AG04449 (cell line): ENCODE measurements at regions of chr11 and their contacts with region 1.

Region 1: DNA sequence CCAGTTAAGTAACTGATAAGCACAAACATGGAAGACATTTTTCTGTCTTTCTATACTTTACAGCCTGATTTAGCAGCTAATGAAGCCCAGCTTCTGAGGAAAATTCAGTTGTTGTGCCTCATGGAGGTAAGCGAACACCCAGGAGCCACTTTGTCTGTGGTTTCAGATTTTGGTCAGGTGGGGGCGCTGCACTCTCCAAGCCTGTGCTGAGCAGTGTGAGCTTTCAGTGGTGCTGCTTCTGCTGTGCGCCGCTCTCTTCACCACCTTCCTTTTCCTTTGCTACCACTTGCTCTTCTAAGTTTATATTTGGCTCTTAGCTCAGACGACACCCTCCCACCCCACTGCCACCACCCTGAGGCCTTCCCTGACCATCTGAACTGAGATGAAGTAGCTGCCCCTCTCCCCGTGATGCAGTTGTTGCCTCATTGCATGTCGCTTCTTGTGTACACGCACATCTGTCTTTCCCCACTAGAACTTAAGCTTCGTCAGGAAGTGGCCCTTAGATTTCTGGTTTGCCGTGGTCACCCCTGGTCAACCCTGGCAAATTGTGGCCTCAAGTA is 14.0 kb downstream of the PSMD13 start:
- DNase-seq: no peak
- H3K4me3 ChIP-seq: no peak overlapping the region
- CTCF ChIP-seq: peak; percentile 69

Region 2: DNA sequence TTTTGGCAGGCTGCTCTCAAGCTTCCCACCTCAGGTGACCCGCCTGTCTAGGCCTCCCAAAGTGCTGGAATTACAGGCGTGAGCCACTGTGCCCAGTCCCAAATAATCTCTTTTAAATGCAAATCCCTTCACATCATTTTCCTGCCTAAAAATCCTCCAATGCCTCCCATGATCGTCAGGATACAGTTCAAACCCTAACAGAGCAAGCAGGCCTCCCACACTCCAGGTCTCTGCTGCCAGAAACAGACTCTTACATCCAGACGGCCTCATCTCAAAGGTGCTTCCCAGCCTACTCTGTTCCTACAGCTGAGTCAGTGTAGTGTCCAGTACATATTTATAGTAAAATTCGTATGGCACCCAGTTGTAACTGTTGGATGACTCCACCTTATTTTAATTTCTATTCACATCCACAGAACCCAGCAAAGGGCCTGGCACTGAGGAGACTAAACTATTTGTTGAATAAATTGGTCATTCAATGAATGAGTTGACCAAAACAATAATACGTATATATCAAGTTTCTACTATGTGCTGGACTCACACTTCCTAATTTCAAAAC is 22.9 kb before region 1 on chr11:
- CTCF ChIA-PET with region 1: interaction called, 24 read pairs
- POLR2A ChIA-PET with region 1: no interaction called
- DNase-seq: no peak
- H3K4me3 ChIP-seq: no peak overlapping the region
- CTCF ChIP-seq: no peak

Region 3: GRCh38 chr11:261624-262023 is 10.8 kb after region 1 on chr11:
- CTCF ChIA-PET with region 1: interaction called, 12 read pairs
- POLR2A ChIA-PET with region 1: no interaction called
- DNase-seq: no peak
- H3K4me3 ChIP-seq: no peak overlapping the region
- CTCF ChIP-seq: no peak

Region 4: DNA sequence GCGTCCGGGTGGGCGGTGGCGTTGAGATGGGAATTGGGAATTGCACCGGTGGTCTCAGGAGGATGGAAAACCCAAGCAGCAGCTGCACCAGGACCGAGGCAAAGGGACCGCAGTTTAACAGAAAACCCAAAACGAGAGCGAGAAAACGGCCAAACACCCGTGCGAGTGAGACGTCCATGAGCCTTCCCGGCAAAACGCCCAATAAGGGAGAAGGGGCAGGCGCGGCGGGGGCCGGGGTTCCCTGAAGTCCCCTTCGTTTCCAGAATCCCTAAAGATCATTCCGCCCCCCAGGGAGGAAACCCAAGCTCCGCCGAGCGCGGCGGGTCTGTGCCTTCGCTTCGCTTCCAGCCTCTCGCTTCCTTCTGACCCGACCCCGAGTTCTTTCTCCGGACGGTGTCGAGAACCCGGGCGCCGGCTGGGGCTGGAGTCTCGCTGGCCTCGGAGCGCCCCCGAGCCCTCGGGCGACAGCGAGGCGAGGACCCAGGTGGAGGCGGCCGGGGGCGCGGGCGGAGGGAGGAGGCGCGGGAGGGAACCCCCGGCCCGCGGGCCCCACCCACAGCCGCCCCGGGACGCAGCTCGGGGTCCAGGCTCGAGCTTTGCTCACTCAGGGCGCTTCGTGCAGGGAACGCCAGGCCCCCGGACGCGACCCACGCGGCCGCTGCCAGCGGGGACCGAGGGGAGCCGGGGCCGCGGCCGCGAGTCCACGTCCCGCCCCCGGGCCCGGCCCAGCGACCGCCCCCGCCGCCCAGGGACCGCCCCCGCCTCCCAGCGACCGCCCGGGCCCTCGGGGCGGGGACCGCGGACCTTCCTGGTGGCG is 37.7 kb after region 1 on chr11 and contains the start of gene PGGHG:
- CTCF ChIA-PET with region 1: interaction called, 10 read pairs
- POLR2A ChIA-PET with region 1: no interaction called
- DNase-seq: no peak
- H3K4me3 ChIP-seq: peak within 1 kb of the TSS; percentile 61
- CTCF ChIP-seq: no peak

Region 5: GRCh38 chr11:363948-364761 is 113.3 kb after region 1 on chr11:
- CTCF ChIA-PET with region 1: interaction called, 61 read pairs
- POLR2A ChIA-PET with region 1: no interaction called
- DNase-seq: no peak
- H3K4me3 ChIP-seq: no peak overlapping the region
- CTCF ChIP-seq: peak; percentile 39